ENCODE measurements at regions of chr1 and their contacts with region 1.

Region 1: DNA sequence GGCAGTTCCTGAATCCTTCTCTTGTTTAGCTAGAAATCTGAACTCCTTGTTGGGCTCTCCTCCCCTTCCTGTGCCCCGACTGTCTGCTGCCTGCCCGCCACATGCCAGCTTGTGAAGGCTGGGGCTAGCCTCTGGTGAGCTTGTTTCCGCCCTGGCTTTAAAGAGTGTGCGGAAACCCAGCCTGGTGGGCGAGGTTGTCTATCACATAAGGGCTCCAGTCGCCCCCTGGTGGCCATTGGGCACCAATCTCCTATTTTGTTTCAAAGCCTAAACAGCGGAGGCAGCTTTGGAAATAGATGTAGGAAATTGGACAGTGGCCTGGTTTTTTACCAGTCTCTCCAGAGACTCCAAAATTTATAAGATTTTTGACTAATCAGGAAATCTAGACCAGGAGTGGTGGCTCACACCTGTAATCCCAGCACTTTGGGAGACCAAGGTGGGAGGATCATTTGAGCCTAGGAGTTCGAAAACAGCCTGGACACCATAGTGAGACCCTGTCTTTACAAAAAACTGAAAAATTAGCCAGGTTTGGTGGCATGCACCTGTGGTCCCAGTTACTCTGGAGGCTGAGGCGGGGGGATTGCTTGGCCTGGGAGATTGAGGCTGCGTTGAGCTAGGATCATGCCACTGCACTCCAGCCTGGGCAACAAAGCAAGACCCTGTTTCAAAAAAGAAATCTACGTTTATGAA is 9.8 kb downstream of the ATP8B2 start:
- DNase-seq: no peak
- ATAC-seq: peak; percentile 92
- H3K4me3 ChIP-seq: no peak overlapping the region
- H3K27ac ChIP-seq: no peak overlapping the region
- H3K4me1 ChIP-seq: peaks cover 0 to 4% of the 10 kb centered on the region in 2 experiments; a peak in 1 of 4 replicates
- H3K27me3 ChIP-seq: no peaks in the 10 kb centered on the region
- CTCF ChIP-seq: peak; percentile 82 to 87 (median 82); a peak in 5 of 6 replicates
- POLR2A ChIP-seq: no peak
- RAD21 ChIP-seq: peak; percentile 84

Region 2: GRCh38 chr1:153337980-153338853 is 997.0 kb before region 1 on chr1:
- CTCF ChIA-PET with region 1: no interaction called
- POLR2A ChIA-PET with region 1: no interaction called
- RAD21 ChIA-PET with region 1: no interaction called
- intact Hi-C with region 1: no loop called
- DNase-seq: no peak
- ATAC-seq: no peak
- H3K4me3 ChIP-seq: no peak overlapping the region
- H3K27ac ChIP-seq: no peak overlapping the region
- H3K4me1 ChIP-seq: no peaks in the 10 kb centered on the region
- H3K27me3 ChIP-seq: peaks cover 16% of the 10 kb centered on the region
- CTCF ChIP-seq: no peak
- POLR2A ChIP-seq: no peak
- RAD21 ChIP-seq: no peak

Region 3: GRCh38 chr1:154183045-154183915 is 151.9 kb before region 1 on chr1:
- CTCF ChIA-PET with region 1: interaction called, 3 read pairs
- POLR2A ChIA-PET with region 1: no interaction called
- RAD21 ChIA-PET with region 1: no interaction called
- intact Hi-C with region 1: loop called (anchors 5 kb)
- DNase-seq: peak; percentile 97
- ATAC-seq: peak; percentile 96
- H3K4me3 ChIP-seq: peak overlapping the region; percentile 90 to 98
- H3K27ac ChIP-seq: peak overlapping the region; percentile 78
- H3K4me1 ChIP-seq: peaks cover 19 to 38% of the 10 kb centered on the region in 2 experiments
- H3K27me3 ChIP-seq: no peaks in the 10 kb centered on the region
- CTCF ChIP-seq: no peak
- POLR2A ChIP-seq: peak; percentile 90
- RAD21 ChIP-seq: no peak

Region 4: DNA sequence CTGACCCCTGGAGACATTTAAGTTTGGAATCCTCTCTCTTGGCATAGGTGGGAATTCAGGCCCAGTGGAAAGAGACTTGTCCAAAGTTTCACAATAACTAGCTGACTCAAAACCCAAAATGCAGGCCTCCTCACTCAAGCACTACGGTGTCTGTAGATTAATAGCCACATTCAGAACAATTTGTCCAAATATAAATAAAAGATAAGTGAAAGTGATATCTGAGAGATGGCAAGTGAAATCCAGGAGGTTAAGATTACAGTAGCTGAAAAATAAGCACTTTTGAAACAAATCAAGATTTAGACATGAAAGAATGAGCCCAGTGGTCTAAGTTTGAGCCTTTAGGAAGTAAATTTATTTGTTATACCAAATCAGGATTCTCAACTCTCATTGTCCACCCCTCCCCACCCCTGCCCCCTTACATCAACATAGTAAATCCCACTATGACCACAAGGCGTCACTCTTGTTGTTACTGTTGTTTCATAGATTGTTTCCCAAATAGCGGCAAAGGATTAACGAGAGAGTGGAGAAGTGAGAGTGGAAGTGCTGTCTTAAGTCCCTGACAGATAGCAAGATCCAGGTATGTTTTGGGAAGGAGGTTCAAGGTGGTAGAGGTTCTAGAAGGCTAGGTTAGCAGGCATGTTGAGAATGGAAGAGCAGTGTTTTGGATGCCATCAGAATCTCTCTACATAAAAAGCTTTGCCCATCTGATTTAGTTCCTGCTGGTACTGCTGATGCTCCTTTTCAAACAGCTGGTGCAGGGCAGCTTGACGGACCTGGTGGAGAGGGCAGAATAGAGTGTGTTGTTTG is 136.2 kb before region 1 on chr1:
- CTCF ChIA-PET with region 1: interaction called, 18 read pairs
- POLR2A ChIA-PET with region 1: interaction called, 5 read pairs
- RAD21 ChIA-PET with region 1: interaction called in 1 of 2 experiments, 5 read pairs
- intact Hi-C with region 1: no loop called
- DNase-seq: no peak
- ATAC-seq: peak; percentile 86
- H3K4me3 ChIP-seq: 0 out of 4 replicates have a peak overlapping the region, but pooled peaks of 1 of the 2 experiments have one; percentile 2
- H3K27ac ChIP-seq: no peak overlapping the region
- H3K4me1 ChIP-seq: peaks cover 2 to 10% of the 10 kb centered on the region in 2 experiments; a peak in 2 of 4 replicates
- H3K27me3 ChIP-seq: peaks cover 10% of the 10 kb centered on the region; the same call in 1 of the 2 replicates
- CTCF ChIP-seq: peak; percentile 50 to 77 (median 71)
- POLR2A ChIP-seq: no peak
- RAD21 ChIP-seq: peak; percentile 79

Region 5: DNA sequence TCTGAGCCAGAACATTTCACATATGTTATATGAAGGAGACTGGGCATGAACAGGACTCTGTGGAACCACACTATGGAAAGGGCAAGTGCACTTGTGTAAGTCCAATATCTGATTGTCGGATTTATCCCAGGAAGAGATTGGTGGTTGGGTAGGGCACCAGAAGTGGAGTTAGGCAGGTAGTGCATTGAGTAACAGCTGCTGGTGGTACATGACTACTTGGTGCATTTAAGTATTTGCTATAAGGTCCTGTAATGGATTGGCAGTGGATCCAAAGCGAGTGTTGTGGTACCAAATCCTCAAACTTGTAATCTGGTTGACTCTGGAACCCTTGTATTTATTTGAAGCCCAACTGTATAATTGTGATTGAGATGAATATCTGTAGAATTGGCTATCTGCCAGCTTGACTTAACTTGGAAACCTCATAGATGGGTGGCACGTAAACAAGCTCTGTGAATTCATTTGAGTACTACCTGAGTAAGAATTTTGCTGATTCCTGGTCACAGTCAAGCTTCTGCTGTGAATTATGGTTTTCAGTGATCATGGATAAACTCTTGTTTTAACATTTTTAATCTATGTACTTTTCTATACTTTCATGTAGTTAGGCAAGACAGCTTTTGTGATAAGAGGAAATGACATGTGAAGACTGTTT is 93.3 kb before region 1 on chr1:
- CTCF ChIA-PET with region 1: no interaction called
- POLR2A ChIA-PET with region 1: no interaction called
- RAD21 ChIA-PET with region 1: no interaction called
- intact Hi-C with region 1: no loop called
- DNase-seq: no peak
- ATAC-seq: no peak
- H3K4me3 ChIP-seq: no peak overlapping the region
- H3K27ac ChIP-seq: no peak overlapping the region
- H3K4me1 ChIP-seq: no peaks in the 10 kb centered on the region
- H3K27me3 ChIP-seq: no peaks in the 10 kb centered on the region
- CTCF ChIP-seq: no peak
- POLR2A ChIP-seq: no peak
- RAD21 ChIP-seq: no peak

Region 6: DNA sequence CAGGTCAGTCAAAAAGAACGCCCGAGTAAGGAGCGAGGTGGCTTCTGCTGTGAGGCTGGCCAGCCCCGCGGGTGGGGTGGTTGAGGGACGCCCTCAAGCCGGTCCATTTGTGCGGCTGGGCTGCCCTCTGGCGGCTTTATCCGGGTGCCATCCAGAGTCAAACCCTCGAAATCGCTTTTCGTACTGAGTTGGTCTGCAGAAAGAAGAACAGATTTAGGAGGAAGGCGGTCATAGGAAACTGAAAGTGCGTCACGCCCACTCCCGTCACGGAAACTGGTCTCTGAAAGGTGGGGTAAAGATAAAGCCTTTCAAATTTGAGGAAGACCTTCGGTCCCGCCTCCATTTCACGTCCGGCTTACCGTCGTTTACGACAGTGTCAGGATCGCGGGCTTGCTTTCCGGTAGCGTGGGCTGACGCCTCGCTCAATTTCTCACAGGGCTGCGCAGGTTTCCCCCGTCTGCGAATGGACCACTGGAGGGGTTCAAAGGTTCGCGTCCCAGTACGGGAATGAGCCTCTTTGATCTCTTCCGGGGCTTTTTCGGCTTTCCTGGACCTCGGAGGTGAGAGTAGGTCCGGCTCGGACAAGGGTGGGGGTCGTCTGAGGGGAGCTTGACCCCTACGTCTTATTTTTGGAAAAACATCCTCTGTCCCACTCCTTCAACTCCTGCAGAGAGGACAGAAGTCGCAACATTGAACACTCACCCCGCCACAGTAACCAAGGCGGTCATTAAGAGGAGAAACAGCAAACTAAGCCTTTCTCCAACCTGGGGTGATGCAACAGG is 62.8 kb before region 1 on chr1 and contains the start of gene HAX1:
- CTCF ChIA-PET with region 1: interaction called, 15 read pairs
- POLR2A ChIA-PET with region 1: no interaction called
- RAD21 ChIA-PET with region 1: interaction called, 3 to 5 read pairs
- intact Hi-C with region 1: no loop called
- DNase-seq: peak; percentile 96
- ATAC-seq: peak; percentile 94
- H3K4me3 ChIP-seq: peak within 1 kb of the TSS; percentile 78 to 97
- H3K27ac ChIP-seq: peak within 1 kb of the TSS; percentile 73
- H3K4me1 ChIP-seq: peaks cover 3 to 16% of the 10 kb centered on the region in 2 experiments; a peak in 3 of 4 replicates
- H3K27me3 ChIP-seq: no peaks in the 10 kb centered on the region
- CTCF ChIP-seq: peak; percentile 71 to 92 (median 91)
- POLR2A ChIP-seq: peak; percentile 48
- RAD21 ChIP-seq: peak; percentile 98
- total RNA-seq, gene HAX1: 93.6 TPM

Region 7: DNA sequence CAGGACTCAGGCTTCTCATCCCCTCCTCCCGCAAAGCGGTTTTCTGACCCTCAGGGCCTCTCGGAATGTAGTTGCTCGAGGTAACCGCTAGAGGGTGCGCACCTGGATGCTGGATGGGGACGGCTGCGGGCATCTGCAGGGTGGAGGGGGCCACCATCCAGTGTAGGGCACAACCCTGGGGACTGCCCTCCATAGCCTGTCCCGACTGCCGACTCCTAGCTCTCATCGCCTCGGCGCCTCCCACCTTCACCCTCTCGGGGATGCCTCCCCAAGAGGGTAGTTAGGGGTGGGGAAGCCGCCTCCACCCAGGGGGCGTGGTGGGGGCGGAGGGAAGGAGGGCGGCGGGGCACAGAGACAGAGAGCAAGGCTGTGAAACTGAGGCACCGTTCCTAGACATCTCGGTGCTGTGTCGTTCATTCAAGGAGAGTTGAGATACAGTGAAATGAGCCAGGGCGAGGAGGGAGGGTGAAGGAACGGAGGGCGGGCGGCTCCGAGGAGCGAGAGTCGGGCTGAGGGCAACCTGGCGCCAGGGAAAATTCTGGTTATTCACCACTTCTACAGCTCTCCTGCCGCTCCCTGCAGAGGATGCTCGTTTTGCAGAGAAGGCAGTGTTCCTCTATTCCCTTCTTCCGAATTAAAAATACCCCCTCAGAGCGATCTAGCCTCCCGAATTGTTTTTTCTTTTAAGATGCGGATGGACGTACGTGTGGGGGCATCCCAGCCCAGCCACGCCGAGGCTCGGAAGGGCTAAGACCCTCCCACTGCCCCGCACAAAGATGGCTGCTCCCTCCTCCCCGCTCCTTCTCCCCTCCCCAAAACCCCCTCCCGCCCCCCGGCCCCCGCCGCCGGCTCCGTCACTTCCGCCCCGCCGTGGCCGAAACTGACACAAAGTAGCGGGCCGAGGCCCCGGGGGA is 10.2 kb before region 1 on chr1 and contains the start of gene ATP8B2:
- CTCF ChIA-PET with region 1: interaction called, 32 read pairs
- POLR2A ChIA-PET with region 1: no interaction called
- RAD21 ChIA-PET with region 1: interaction called, 3 to 5 read pairs
- intact Hi-C with region 1: no loop called
- DNase-seq: peak; percentile 59
- ATAC-seq: peak; percentile 65
- H3K4me3 ChIP-seq: peak within 1 kb of the TSS; percentile 77 to 79
- H3K27ac ChIP-seq: peak within 1 kb of the TSS; percentile 79
- H3K4me1 ChIP-seq: peaks cover 26 to 49% of the 10 kb centered on the region in 2 experiments
- H3K27me3 ChIP-seq: no peaks in the 10 kb centered on the region
- CTCF ChIP-seq: peak; percentile 75 to 94 (median 93)
- POLR2A ChIP-seq: no peak
- RAD21 ChIP-seq: peak; percentile 49
- total RNA-seq, gene ATP8B2: 22.1 TPM

Region 8: GRCh38 chr1:154344977-154345837 is 10.0 kb after region 1 on chr1:
- CTCF ChIA-PET with region 1: interaction called, 14 read pairs
- POLR2A ChIA-PET with region 1: no interaction called
- RAD21 ChIA-PET with region 1: no interaction called
- intact Hi-C with region 1: no loop called
- DNase-seq: no peak
- ATAC-seq: peak; percentile 85
- H3K4me3 ChIP-seq: no peak overlapping the region
- H3K27ac ChIP-seq: no peak overlapping the region
- H3K4me1 ChIP-seq: no peaks in the 10 kb centered on the region; a peak in 1 of 4 replicates
- H3K27me3 ChIP-seq: no peaks in the 10 kb centered on the region
- CTCF ChIP-seq: peak; percentile 36 to 93 (median 91); a peak in 5 of 6 replicates
- POLR2A ChIP-seq: no peak
- RAD21 ChIP-seq: peak; percentile 63

Region 9: DNA sequence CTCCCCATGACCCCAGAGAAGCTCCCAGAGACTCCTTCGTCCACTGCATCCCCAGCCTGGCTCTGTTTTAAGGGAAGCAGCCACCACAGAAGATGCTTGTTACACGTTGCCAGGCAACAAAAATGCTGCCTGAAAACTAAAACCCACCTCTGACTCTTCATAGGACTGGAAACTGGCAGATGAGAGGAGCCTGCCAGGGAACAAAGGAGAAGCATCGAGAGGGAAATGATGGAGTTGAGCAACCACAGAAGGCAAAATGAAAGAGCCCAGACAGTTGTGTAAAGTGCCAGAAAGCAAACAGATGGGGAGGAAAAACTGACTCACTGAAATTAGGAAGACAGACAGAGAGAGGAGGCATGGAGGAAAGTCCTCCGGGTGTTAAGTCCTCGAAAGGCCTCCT is 416.5 kb after region 1 on chr1:
- CTCF ChIA-PET with region 1: no interaction called
- POLR2A ChIA-PET with region 1: no interaction called
- RAD21 ChIA-PET with region 1: no interaction called
- intact Hi-C with region 1: no loop called
- DNase-seq: no peak
- ATAC-seq: no peak
- H3K4me3 ChIP-seq: no peak overlapping the region
- H3K27ac ChIP-seq: no peak overlapping the region
- H3K4me1 ChIP-seq: peaks cover 0 to 8% of the 10 kb centered on the region in 2 experiments; a peak in 1 of 4 replicates
- H3K27me3 ChIP-seq: peaks cover 23% of the 10 kb centered on the region
- CTCF ChIP-seq: no peak
- POLR2A ChIP-seq: no peak
- RAD21 ChIP-seq: no peak